ENCODE measurements at regions of chr21 and their contacts with region 1.

Region 1: DNA sequence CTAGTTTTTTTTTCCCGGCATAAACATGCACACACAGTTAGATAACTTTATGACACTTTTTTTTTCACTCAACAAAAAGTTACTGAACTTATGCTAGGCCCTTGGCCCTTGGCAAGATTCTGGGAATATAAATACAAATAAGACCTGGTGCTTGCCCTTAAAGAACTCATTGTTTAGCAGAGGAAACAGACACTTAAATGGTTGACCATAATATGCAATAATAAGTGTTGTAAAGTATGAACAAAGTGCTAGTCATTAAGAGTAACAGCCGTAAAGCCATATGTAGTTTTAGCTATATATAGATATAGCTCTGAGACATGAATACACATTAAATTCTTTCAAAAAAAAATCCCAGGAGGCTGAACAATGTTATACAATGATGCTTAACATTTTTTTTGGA is 198.3 kb downstream of the CYYR1 start:
- DNase-seq: no peak
- ATAC-seq: no peak
- H3K4me3 ChIP-seq: no peak overlapping the region
- H3K27ac ChIP-seq: no peak overlapping the region
- H3K4me1 ChIP-seq: no peaks in the 10 kb centered on the region
- H3K27me3 ChIP-seq: no peaks in the 10 kb centered on the region

Region 2: GRCh38 chr21:26437326-26438009 is 62.7 kb after region 1 on chr21:
- intact Hi-C with region 1: loop called in 1 of 4 experiments (anchors 10 kb)
- DNase-seq: no peak
- ATAC-seq: no peak
- H3K4me3 ChIP-seq: no peak overlapping the region
- H3K27ac ChIP-seq: no peak overlapping the region
- H3K4me1 ChIP-seq: no peaks in the 10 kb centered on the region
- H3K27me3 ChIP-seq: no peaks in the 10 kb centered on the region